ENCODE measurements at regions of chr16 and their contacts with region 1.

Region 1: GRCh38 chr16:10509534-10510025 is 70.8 kb downstream of the EMP2 start:
- H3K4me3 ChIP-seq: no peak overlapping the region
- H3K27ac ChIP-seq: no peak overlapping the region
- H3K4me1 ChIP-seq: no peaks in the 10 kb centered on the region
- CTCF ChIP-seq: peak; percentile 59

Region 2: GRCh38 chr16:10256784-10257641 is 252.6 kb before region 1 on chr16:
- CTCF ChIA-PET with region 1: interaction called, 13 read pairs
- POLR2A ChIA-PET with region 1: no interaction called
- H3K4me3 ChIP-seq: no peak overlapping the region
- H3K27ac ChIP-seq: no peak overlapping the region
- H3K4me1 ChIP-seq: no peaks in the 10 kb centered on the region
- CTCF ChIP-seq: peak; percentile 35

Region 3: GRCh38 chr16:10308305-10309193 is 201.0 kb before region 1 on chr16:
- CTCF ChIA-PET with region 1: interaction called, 15 read pairs
- POLR2A ChIA-PET with region 1: no interaction called
- H3K4me3 ChIP-seq: no peak overlapping the region
- H3K27ac ChIP-seq: no peak overlapping the region
- H3K4me1 ChIP-seq: no peaks in the 10 kb centered on the region
- CTCF ChIP-seq: no peak

Region 4: GRCh38 chr16:10314811-10315210 is 194.8 kb before region 1 on chr16:
- CTCF ChIA-PET with region 1: interaction called, 26 read pairs
- POLR2A ChIA-PET with region 1: no interaction called
- H3K4me3 ChIP-seq: no peak overlapping the region
- H3K27ac ChIP-seq: no peak overlapping the region
- H3K4me1 ChIP-seq: no peaks in the 10 kb centered on the region
- CTCF ChIP-seq: no peak

Region 5: DNA sequence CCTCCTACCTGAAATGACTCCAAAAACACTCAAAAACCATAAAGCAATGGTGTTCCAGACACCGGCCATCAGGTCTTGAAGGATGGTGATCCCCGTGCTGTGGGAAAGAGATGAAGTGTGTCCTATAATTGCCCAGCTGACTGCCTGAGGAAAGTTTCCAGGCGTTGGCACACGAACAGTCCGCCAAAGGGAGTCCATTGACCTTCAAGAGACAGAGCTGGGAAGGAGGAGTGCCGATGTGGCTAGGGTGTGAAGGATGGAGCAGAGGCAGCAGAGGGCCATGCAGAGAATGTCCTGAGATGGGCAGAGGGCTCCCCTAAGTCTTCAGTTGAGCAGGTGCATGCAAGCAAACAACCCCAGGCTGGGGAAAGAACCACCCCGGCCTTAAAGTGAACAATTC is 222.2 kb after region 1 on chr16:
- CTCF ChIA-PET with region 1: interaction called, 101 read pairs
- POLR2A ChIA-PET with region 1: no interaction called
- H3K4me3 ChIP-seq: no peak overlapping the region
- H3K27ac ChIP-seq: no peak overlapping the region
- H3K4me1 ChIP-seq: no peaks in the 10 kb centered on the region
- CTCF ChIP-seq: no peak

Region 6: GRCh38 chr16:10737068-10737625 is 227.6 kb after region 1 on chr16:
- CTCF ChIA-PET with region 1: interaction called, 101 read pairs
- POLR2A ChIA-PET with region 1: no interaction called
- H3K4me3 ChIP-seq: no peak overlapping the region
- H3K27ac ChIP-seq: no peak overlapping the region
- H3K4me1 ChIP-seq: no peaks in the 10 kb centered on the region; the same call in 1 of the 2 replicates
- CTCF ChIP-seq: peak; percentile 57; the same call in 1 of the 2 replicates

Region 7: GRCh38 chr16:10918294-10919002 is 408.9 kb after region 1 on chr16:
- CTCF ChIA-PET with region 1: interaction called, 16 read pairs
- POLR2A ChIA-PET with region 1: no interaction called
- H3K4me3 ChIP-seq: no peak overlapping the region
- H3K27ac ChIP-seq: no peak overlapping the region
- H3K4me1 ChIP-seq: no peaks in the 10 kb centered on the region
- CTCF ChIP-seq: peak; percentile 67; the same call in 1 of the 2 replicates